ENCODE measurements at regions of chr12 and their contacts with region 1.

Region 1: GRCh38 chr12:28872654-28873268 is 276.3 kb upstream of the FAR2 start:
- DNase-seq: no peak
- H3K4me3 ChIP-seq: no peak overlapping the region
- H3K27ac ChIP-seq: no peak overlapping the region
- H3K4me1 ChIP-seq: peaks cover 0 to 8% (median 0%) of the 10 kb centered on the region in 4 donors
- H3K27me3 ChIP-seq: no peaks in the 10 kb centered on the region
- CTCF ChIP-seq: peak; percentile 49 to 62 (median 52)
- EP300 ChIP-seq: no peak
- POLR2A ChIP-seq: no peak

Region 2: GRCh38 chr12:27969624-27970400 is 902.9 kb before region 1 on chr12:
- intact Hi-C with region 1: loop called (anchors 10 kb)
- DNase-seq: no peak
- H3K4me3 ChIP-seq: peak overlapping the region; percentile 59 to 72 (median 61)
- H3K27ac ChIP-seq: peak overlapping the region; percentile 68 to 82 (median 76)
- H3K4me1 ChIP-seq: peaks cover 29 to 43% (median 33%) of the 10 kb centered on the region in 4 donors
- H3K27me3 ChIP-seq: peaks cover 0 to 77% (median 11%) of the 10 kb centered on the region in 4 donors
- CTCF ChIP-seq: peak in 1 of 3 experiments; percentile 10
- EP300 ChIP-seq: no peak
- POLR2A ChIP-seq: no peak

Region 3: DNA sequence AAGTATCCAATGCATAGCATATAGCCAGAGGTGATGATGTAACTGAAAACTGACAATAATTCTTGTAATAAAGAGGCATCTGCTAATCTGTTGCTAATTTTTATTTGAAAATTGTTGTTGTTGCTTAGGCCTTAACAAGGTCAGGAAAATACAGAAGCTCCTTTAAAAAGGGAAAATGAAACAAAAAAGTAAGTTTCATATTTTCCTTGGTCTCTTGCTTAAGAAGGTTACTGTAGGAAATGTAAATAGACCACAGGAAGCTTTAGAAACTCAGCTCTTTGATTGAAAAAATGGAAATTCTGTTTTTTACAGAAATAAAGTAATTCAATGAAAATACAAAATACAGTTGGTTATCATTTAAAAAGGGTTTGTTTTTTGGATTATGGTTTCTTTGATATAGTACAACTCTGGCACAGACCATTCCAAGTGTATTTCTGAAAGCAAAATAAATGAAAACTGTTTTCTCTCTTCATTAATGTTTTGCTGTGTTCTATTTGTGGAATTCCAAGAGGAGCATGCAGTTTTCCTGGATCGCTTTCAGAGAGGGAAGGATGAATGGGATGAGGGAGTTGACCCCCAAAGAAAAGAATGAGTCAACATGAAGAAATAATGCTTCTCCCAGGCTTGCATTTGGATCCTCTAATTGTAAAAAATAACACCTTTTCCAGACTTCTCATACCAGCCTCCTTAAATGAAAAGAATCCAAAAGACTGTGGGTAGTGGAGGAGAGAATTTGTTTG is 121.6 kb before region 1 on chr12:
- intact Hi-C with region 1: no loop called
- DNase-seq: no peak
- H3K4me3 ChIP-seq: no peak overlapping the region
- H3K27ac ChIP-seq: no peak overlapping the region
- H3K4me1 ChIP-seq: no peaks in the 10 kb centered on the region
- H3K27me3 ChIP-seq: no peaks in the 10 kb centered on the region
- CTCF ChIP-seq: no peak
- EP300 ChIP-seq: no peak
- POLR2A ChIP-seq: no peak

Region 4: DNA sequence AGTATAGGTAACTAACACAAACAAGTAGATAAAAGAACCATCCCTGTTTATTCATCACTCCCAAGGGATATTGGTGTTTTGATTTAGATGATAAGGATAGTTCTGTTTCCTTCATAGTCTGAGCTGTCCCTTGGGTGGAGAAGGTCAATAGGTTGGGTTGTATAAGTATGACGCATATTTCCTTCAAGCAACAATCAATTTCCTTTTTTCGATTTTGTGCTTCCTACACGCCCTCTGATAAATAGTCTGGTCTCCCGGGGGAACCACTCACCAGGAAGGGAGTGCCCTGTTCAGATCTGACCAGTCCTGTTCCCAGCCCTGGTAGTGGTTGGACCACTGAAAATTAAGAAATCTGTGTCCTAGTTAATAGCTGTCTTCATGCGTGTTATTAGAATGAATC is 102.4 kb before region 1 on chr12:
- intact Hi-C with region 1: no loop called
- DNase-seq: no peak
- H3K4me3 ChIP-seq: no peak overlapping the region
- H3K27ac ChIP-seq: peak overlapping the region in 2 of 4 donors; percentile 41 to 51
- H3K4me1 ChIP-seq: peaks cover 0 to 15% (median 13%) of the 10 kb centered on the region in 4 donors
- H3K27me3 ChIP-seq: no peaks in the 10 kb centered on the region
- CTCF ChIP-seq: no peak
- EP300 ChIP-seq: no peak
- POLR2A ChIP-seq: no peak